Colonic mucosa (tissue), 4 donors: ENCODE measurements at regions of chr17 and their contacts with region 1.

Region 1: GRCh38 chr17:27879987-27880608 is 13.1 kb downstream of the LYRM9 start:
- DNase-seq: peak; percentile 87
- H3K4me3 ChIP-seq: no peak overlapping the region
- H3K27ac ChIP-seq: no peak overlapping the region
- H3K4me1 ChIP-seq: no peaks in the 10 kb centered on the region
- H3K27me3 ChIP-seq: no peaks in the 10 kb centered on the region
- CTCF ChIP-seq: peak; percentile 81

Region 2: DNA sequence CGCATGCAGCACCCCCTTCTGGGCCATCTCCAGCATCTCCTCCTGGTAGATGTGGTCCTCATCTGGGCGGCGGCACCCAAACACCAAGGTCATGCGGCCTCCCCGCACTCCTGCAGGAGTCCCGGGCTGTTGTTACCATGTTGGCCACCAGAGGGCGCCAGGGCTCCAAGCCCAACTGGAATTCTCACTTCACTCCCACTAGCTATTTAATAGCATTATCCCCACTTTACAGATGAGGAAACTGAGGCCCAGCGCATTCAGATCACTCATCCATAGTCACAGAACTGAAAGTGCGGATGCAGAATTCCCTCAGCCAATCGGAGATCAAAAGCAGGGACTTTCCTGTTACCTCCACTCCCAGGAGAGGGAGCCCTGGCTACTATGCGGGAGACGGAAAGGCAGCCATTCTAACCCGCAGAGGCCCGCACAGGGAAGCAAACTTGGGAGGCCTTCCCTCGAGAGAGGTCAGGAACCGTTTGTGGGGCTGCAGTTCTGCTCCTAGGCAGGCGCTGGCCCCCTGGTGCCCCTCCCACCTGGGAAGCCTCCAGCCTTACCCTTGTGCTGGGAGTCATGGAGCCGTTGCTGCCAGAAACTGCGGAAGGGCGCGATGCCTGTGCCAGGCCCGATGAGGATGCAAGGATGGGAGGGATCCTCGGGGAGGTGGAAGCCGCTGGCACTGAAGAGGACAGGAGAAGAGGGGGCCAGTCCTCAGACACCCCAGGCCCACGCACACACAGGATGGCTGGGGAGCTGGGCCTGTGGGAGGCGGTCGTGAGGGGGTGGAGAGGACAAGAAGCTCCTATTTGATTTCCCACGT is 119.8 kb before region 1 on chr17:
- intact Hi-C with region 1: loop called (anchors 2 kb)
- DNase-seq: peak; percentile 72
- H3K4me3 ChIP-seq: no peak overlapping the region
- H3K27ac ChIP-seq: no peak overlapping the region
- H3K4me1 ChIP-seq: no peaks in the 10 kb centered on the region
- H3K27me3 ChIP-seq: no peaks in the 10 kb centered on the region
- CTCF ChIP-seq: peak; percentile 88

Region 3: GRCh38 chr17:27805520-27806146 is 74.5 kb before region 1 on chr17:
- intact Hi-C with region 1: loop called (anchors 2 kb)
- DNase-seq: peak; percentile 93
- H3K4me3 ChIP-seq: peak overlapping the region; percentile 28
- H3K27ac ChIP-seq: peak overlapping the region; percentile 50
- H3K4me1 ChIP-seq: peaks cover 11% of the 10 kb centered on the region
- H3K27me3 ChIP-seq: no peaks in the 10 kb centered on the region
- CTCF ChIP-seq: peak; percentile 68